PC-3 (cell line): ENCODE measurements at regions of chr9 and their contacts with region 1.

Region 1: DNA sequence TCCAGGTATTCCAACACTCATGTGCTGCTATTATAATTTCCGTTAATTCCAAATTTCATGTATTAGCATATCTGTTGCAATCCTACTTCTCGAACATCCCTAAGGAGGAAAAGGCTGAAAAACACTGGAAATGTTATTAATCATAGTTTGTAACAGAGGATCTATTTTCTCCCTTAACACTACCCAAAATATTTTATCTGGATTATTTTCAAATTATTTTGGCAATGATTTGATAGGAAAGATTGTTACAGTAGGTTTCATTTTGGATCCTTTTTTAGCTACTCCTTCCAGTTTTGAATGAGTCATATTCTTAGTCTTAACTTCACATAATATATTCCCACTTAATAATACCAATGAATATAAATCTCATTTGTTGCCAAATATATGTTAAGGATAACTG is 13.9 kb upstream of the NAA35 start:
- DNase-seq: no peak
- ATAC-seq: no peak
- H3K4me3 ChIP-seq: no peak overlapping the region
- H3K27ac ChIP-seq: no peak overlapping the region
- H3K4me1 ChIP-seq: no peaks in the 10 kb centered on the region
- H3K27me3 ChIP-seq: no peaks in the 10 kb centered on the region
- CTCF ChIP-seq: no peak

Region 2: DNA sequence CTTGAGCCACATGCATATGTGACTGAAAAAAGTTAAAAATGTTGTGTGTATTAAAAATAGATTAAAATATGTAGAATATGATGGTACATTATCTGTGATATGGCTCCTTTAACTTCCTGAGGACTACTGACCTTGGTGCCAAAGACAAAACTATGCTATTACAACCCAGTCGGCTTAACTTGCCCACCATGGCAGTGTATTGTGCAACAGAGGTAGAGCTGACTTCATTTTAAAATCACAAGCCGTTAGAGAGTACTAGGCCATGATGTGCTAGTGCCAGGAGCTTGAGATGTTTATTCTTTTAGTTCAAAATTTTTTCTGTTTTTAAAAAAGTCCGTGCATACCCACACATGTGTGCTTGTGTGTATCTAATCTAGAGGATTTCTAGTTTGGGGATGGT is 60.2 kb after region 1 on chr9:
- CTCF ChIA-PET with region 1: no interaction called
- POLR2A ChIA-PET with region 1: no interaction called
- intact Hi-C with region 1: no loop called
- DNase-seq: no peak
- ATAC-seq: no peak
- H3K4me3 ChIP-seq: no peak overlapping the region
- H3K27ac ChIP-seq: no peak overlapping the region
- H3K4me1 ChIP-seq: no peaks in the 10 kb centered on the region
- H3K27me3 ChIP-seq: no peaks in the 10 kb centered on the region
- CTCF ChIP-seq: no peak

Region 3: GRCh38 chr9:86257391-86257790 is 330.3 kb after region 1 on chr9:
- CTCF ChIA-PET with region 1: no interaction called
- POLR2A ChIA-PET with region 1: interaction called, 39 read pairs
- intact Hi-C with region 1: no loop called
- DNase-seq: no peak
- ATAC-seq: no peak
- H3K4me3 ChIP-seq: no peak overlapping the region
- H3K27ac ChIP-seq: no peak overlapping the region
- H3K4me1 ChIP-seq: no peaks in the 10 kb centered on the region
- H3K27me3 ChIP-seq: no peaks in the 10 kb centered on the region
- CTCF ChIP-seq: no peak